ENCODE measurements at regions of chr6 and their contacts with region 1.

Region 1: DNA sequence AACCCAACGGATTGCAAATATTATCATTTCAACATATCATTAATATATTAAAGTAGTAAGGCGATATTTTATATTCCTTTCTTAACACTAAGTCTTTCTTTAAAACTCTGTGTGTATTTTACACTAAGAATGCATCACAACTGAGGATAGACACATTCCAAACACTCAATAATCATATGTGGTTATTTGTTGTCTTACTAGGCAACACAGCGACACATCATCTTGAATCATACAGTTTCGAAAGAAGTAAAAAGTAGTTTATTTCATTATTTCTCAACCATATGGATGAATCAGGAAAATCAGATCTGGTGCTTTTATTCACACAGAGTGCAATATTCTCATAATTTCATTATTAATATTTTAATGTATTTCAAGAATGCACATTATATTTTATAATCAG is 662.4 kb downstream of the EPHA7 start:
- DNase-seq: peak; percentile 65
- ATAC-seq: peak; percentile 37
- H3K4me3 ChIP-seq: no peak overlapping the region
- H3K27ac ChIP-seq: no peak overlapping the region
- H3K4me1 ChIP-seq: no peaks in the 10 kb centered on the region
- H3K27me3 ChIP-seq: no peaks in the 10 kb centered on the region
- CTCF ChIP-seq: no peak
- POLR2A ChIP-seq: no peak
- RAD21 ChIP-seq: no peak

Region 2: GRCh38 chr6:91970700-91971099 is 786.2 kb before region 1 on chr6:
- CTCF ChIA-PET with region 1: no interaction called
- POLR2A ChIA-PET with region 1: no interaction called
- dilution Hi-C with region 1: no loop called
- in situ Hi-C with region 1: no loop called
- intact Hi-C with region 1: no loop called
- DNase-seq: no peak
- ATAC-seq: no peak
- H3K4me3 ChIP-seq: no peak overlapping the region
- H3K27ac ChIP-seq: no peak overlapping the region
- H3K4me1 ChIP-seq: no peaks in the 10 kb centered on the region
- H3K27me3 ChIP-seq: no peaks in the 10 kb centered on the region
- CTCF ChIP-seq: no peak
- POLR2A ChIP-seq: no peak
- RAD21 ChIP-seq: no peak

Region 3: GRCh38 chr6:92716006-92716405 is 40.9 kb before region 1 on chr6:
- CTCF ChIA-PET with region 1: no interaction called
- POLR2A ChIA-PET with region 1: no interaction called
- dilution Hi-C with region 1: no loop called
- in situ Hi-C with region 1: no loop called
- intact Hi-C with region 1: loop called (anchors 5 kb)
- DNase-seq: peak; percentile 64
- ATAC-seq: peak; percentile 88
- H3K4me3 ChIP-seq: no peak overlapping the region
- H3K27ac ChIP-seq: no peak overlapping the region
- H3K4me1 ChIP-seq: no peaks in the 10 kb centered on the region; the same call in 1 of the 2 replicates
- H3K27me3 ChIP-seq: no peaks in the 10 kb centered on the region
- CTCF ChIP-seq: no peak
- POLR2A ChIP-seq: no peak
- RAD21 ChIP-seq: no peak